Heart right ventricle (tissue), 16 donors: ENCODE measurements at regions of chr1 and their contacts with region 1.

Region 1: GRCh38 chr1:220370031-220370700 is 97.9 kb upstream of the RAB3GAP2 start:
- DNase-seq: peak in 1 of 2 donors; percentile 15
- ATAC-seq: peak; percentile 12 to 76 (median 56)
- H3K4me3 ChIP-seq: no peak overlapping the region
- H3K27ac ChIP-seq: peak overlapping the region in 5 of 10 donors; percentile 6 to 65 (median 46)
- H3K4me1 ChIP-seq: peaks cover 0 to 33% (median 27%) of the 10 kb centered on the region in 9 donors
- H3K27me3 ChIP-seq: no peaks in the 10 kb centered on the region
- CTCF ChIP-seq: no peak

Region 2: GRCh38 chr1:220344745-220345144 is 25.4 kb before region 1 on chr1:
- intact Hi-C with region 1: loop called in 1 of 10 experiments (anchors 2 kb)
- DNase-seq: no peak
- ATAC-seq: no peak
- H3K4me3 ChIP-seq: no peak overlapping the region
- H3K27ac ChIP-seq: no peak overlapping the region
- H3K4me1 ChIP-seq: no peaks in the 10 kb centered on the region
- H3K27me3 ChIP-seq: no peaks in the 10 kb centered on the region
- CTCF ChIP-seq: no peak

Region 3: DNA sequence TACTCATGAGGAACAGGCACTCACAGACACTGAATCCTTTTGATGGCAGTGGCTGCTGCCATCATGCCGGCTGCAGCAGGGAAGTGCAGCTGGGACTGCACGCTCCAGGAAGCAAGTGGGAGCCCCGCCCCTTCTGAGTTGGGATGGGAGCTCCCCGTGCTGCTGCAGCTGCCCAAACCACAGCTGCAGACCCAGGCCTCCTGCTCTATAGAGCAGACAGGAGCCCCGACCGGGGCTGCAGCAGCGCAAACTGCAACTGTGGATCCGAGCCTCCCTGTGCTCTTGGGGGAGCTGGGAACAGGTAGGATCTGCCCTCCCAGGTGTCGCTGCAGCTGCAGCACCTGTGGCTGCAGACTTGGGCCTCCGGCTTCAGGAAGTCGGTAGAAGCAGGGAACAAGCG is 92.6 kb after region 1 on chr1:
- intact Hi-C with region 1: no loop called
- DNase-seq: no peak
- ATAC-seq: peak in 1 of 8 donors; percentile 35
- H3K4me3 ChIP-seq: no peak overlapping the region
- H3K27ac ChIP-seq: no peak overlapping the region
- H3K4me1 ChIP-seq: peaks cover 0 to 11% (median 0%) of the 10 kb centered on the region in 9 donors
- H3K27me3 ChIP-seq: no peaks in the 10 kb centered on the region
- CTCF ChIP-seq: peak in 1 of 9 donors; percentile 10